ENCODE measurements at regions of chr12 and their contacts with region 1.

Region 1: GRCh38 chr12:55817346-55818139 is at the starts of genes ORMDL2 and SARNP:
- DNase-seq: peak; percentile 99
- H3K4me3 Mint-ChIP-seq: no peak within 1 kb of the TSS
- H3K27ac Mint-ChIP-seq: no peak within 1 kb of the TSS
- H3K4me1 Mint-ChIP-seq: peaks cover 43% of the 10 kb centered on the region
- H3K27me3 Mint-ChIP-seq: no peaks in the 10 kb centered on the region
- total RNA-seq, gene ORMDL2: 23.8 to 26.4 TPM
- total RNA-seq, gene SARNP: 100 to 101 TPM

Region 2: GRCh38 chr12:55642669-55643068 is 174.9 kb before region 1 on chr12:
- CTCF ChIA-PET with region 1: interaction called, 3 read pairs
- intact Hi-C with region 1: loop called (anchors 5 kb)
- DNase-seq: peak; percentile 67
- H3K4me3 Mint-ChIP-seq: no peak overlapping the region
- H3K27ac Mint-ChIP-seq: no peak overlapping the region
- H3K4me1 Mint-ChIP-seq: peaks cover 25% of the 10 kb centered on the region
- H3K27me3 Mint-ChIP-seq: peaks cover 2% of the 10 kb centered on the region

Region 3: DNA sequence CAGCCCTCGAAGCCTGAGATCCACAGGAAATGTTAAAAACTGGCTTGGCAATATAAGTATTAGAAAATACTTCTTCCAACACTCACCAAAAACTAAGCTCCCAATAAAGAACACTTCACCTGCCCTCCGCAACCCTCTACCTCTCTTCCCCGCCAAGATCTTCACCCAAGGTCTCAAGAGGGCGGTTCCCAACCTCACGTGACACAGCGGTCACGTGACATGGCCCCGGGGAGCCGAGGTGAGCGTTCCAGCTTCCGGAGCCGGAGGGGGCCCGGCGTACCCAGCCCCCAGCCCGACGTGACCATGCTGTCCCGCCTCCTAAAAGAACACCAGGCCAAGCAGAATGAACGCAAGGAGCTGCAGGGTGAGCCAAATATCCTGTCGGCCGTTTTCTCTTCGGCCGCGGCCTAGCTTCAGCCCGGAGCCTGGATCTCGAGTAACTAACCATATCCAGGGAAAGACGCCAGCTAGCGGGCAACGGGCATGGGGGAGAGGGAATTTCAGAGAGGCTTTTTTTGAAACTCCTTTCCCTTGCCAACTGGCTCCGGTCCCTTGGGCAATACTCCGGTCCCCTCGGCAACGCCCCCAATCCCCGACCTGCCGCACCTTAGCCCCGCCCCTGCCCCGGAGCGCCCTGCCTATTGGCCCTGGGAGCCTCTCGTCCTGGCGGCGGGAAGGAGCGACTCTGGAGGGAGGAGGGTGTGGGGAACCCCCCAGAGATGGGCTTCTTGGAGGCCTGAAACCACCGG is 101.5 kb before region 1 on chr12 and contains the start of gene BLOC1S1:
- CTCF ChIA-PET with region 1: no interaction called
- intact Hi-C with region 1: loop called (anchors 1 kb)
- DNase-seq: peak; percentile 96
- H3K4me3 Mint-ChIP-seq: peak within 1 kb of the TSS; percentile 92
- H3K27ac Mint-ChIP-seq: peak within 1 kb of the TSS; percentile 91
- H3K4me1 Mint-ChIP-seq: peaks cover 28% of the 10 kb centered on the region
- H3K27me3 Mint-ChIP-seq: peaks cover 3% of the 10 kb centered on the region
- total RNA-seq, gene BLOC1S1: 118 to 124 TPM

Region 4: DNA sequence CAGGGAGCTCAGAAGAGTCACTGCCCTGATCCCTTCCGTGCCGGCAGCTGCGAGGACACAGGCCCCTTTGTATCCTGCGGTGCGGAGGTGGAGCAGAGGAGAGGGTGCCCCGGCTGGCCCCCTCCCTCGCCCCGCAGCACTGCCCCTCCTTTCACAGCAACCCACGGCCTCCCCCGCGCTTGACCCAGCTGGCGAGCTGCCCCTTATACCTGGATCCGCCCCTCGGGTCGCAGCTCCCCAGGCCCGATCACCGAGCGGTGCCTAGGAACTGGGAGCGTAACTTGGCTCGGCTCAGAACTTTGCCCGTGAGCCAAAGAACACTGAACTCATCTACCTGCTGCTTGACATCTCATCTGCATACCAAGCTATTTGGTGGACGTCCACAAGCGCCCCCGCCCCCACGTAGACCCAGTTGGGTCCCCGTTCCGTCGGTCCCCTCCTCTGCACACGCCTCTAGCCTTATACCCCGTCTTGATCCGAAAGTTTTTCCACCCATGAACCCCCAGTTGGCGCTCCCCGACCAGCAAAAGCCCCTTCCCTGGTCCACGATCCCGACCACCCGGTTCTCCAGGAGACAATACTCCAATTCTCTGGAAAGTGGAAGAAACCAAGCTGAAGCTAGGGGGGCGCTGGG is 12.5 kb after region 1 on chr12:
- CTCF ChIA-PET with region 1: interaction called, 4 read pairs
- intact Hi-C with region 1: loop called (anchors 1 kb)
- DNase-seq: peak; percentile 24
- H3K4me3 Mint-ChIP-seq: peak overlapping the region; percentile 96
- H3K27ac Mint-ChIP-seq: peak overlapping the region; percentile 87
- H3K4me1 Mint-ChIP-seq: peaks cover 52% of the 10 kb centered on the region
- H3K27me3 Mint-ChIP-seq: no peaks in the 10 kb centered on the region

Region 5: GRCh38 chr12:55899082-55899481 is 81.5 kb after region 1 on chr12:
- CTCF ChIA-PET with region 1: interaction called, 3 read pairs
- intact Hi-C with region 1: loop called (anchors 1 kb)
- DNase-seq: peak; percentile 71
- H3K4me3 Mint-ChIP-seq: no peak overlapping the region
- H3K27ac Mint-ChIP-seq: peak overlapping the region; percentile 70
- H3K4me1 Mint-ChIP-seq: peaks cover 13% of the 10 kb centered on the region
- H3K27me3 Mint-ChIP-seq: no peaks in the 10 kb centered on the region

Region 6: GRCh38 chr12:55940065-55940732 is 122.7 kb after region 1 on chr12:
- CTCF ChIA-PET with region 1: interaction called, 12 read pairs
- intact Hi-C with region 1: loop called (anchors 1 kb)
- DNase-seq: peak; percentile 94
- H3K4me3 Mint-ChIP-seq: no peak overlapping the region
- H3K27ac Mint-ChIP-seq: peak overlapping the region; percentile 74
- H3K4me1 Mint-ChIP-seq: peaks cover 72% of the 10 kb centered on the region
- H3K27me3 Mint-ChIP-seq: no peaks in the 10 kb centered on the region

Region 7: GRCh38 chr12:56014206-56014605 is 196.7 kb after region 1 on chr12:
- CTCF ChIA-PET with region 1: no interaction called
- intact Hi-C with region 1: no loop called
- DNase-seq: no peak
- H3K4me3 Mint-ChIP-seq: no peak overlapping the region
- H3K27ac Mint-ChIP-seq: no peak overlapping the region
- H3K4me1 Mint-ChIP-seq: peaks cover 7% of the 10 kb centered on the region
- H3K27me3 Mint-ChIP-seq: no peaks in the 10 kb centered on the region